CD4-positive, alpha-beta memory T cell (primary cell): ENCODE measurements at regions of chr2 and their contacts with region 1.

Region 1: DNA sequence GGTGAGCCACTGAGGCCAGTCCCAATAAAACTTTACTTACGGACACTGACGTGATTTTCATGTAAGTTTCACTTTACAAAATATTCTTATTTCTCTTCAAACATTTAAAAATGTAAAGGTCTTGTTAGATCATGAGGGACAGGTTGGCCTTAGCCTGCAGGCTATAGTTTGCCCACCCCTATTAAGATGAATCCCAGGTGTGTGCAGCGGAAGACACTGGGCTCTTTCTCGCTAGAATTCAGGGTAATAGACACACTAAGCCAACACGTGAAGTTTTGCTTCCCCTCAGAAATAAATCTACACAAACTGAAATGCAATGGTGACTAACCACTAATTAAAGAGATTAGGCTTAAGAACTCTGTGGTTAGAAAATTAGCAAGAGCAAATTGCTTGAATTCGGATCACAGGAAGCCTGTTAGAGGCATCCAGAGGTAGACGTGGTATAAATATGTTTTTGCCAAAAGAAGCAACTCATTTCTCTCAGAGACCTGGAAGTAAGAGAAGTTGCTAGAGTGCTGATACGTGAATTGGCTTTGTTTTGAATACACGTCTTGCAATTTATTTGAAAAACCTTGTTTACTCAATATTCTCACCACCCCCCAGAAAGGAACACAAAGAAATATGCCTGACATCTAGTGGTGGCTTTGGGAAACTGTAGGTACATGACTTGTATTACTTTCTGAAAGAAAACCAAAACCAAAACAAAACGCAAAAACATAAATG is 151.6 kb downstream of the DTNB start:
- DNase-seq: peak; percentile 68 to 76 (median 72)
- H3K4me3 ChIP-seq: no peak overlapping the region
- H3K4me3 Mint-ChIP-seq: peak overlapping the region in 6 of 8 donors; percentile 4 to 75 (median 21)
- H3K27ac ChIP-seq: no peak overlapping the region
- H3K27ac Mint-ChIP-seq: peak overlapping the region in 5 of 7 donors; percentile 48 to 80 (median 54)
- H3K4me1 ChIP-seq: peaks cover 10% of the 10 kb centered on the region
- H3K4me1 Mint-ChIP-seq: peaks cover 4 to 12% (median 7%) of the 10 kb centered on the region in 4 donors
- H3K27me3 ChIP-seq: no peaks in the 10 kb centered on the region
- H3K27me3 Mint-ChIP-seq: no peaks in the 10 kb centered on the region

Region 2: DNA sequence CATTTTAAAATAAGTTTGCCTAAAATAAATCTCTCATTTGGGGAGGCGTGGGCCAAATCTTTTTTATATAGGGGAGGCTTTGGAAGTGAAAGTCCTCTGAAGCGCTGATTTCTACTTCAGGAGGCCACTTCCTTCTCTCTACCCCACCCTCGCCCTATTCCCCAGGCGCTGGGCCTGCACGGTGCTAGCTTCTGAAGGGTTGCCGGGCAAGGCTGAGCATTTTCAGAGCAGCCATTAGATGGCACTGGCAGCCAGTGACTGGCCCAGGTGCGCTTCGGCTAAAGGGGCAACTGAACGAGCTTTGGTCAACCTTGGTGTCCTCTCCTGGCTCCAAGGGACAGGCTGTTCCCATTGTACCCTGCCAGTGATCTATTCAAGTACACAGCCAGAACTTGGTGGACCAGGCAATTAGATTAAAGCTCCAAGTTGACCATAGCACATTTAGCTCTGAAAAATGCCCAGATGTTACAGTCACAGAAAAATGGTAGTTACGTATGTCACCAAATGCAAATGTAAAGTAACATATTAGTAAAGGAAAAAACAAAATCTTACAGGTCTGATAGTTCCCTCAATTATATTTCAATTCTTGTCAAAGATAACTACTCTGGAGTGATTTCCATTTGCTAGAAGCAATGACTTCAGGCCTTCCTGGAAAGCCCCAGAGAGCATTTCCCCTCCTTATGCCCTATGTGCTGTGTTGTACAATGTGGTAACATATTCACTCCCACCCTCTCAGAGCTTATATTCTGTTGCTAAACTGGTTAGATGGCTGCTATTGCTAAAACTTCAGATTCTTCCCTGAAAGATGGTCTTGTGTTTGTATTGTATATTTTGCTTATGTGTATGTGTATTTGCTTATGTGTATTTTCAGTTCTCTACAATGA is 355.6 kb before region 1 on chr2:
- CTCF ChIA-PET with region 1: interaction called, 3 read pairs
- POLR2A ChIA-PET with region 1: no interaction called
- intact Hi-C with region 1: loop called (anchors 1 kb)
- DNase-seq: peak; percentile 20 to 35 (median 29)
- H3K4me3 ChIP-seq: no peak overlapping the region
- H3K4me3 Mint-ChIP-seq: peak overlapping the region in 4 of 8 donors; percentile 9 to 87 (median 57)
- H3K27ac ChIP-seq: no peak overlapping the region
- H3K27ac Mint-ChIP-seq: no peak overlapping the region
- H3K4me1 ChIP-seq: peaks cover 13% of the 10 kb centered on the region
- H3K4me1 Mint-ChIP-seq: peaks cover 9 to 33% (median 17%) of the 10 kb centered on the region in 4 donors
- H3K27me3 ChIP-seq: peaks cover 20% of the 10 kb centered on the region
- H3K27me3 Mint-ChIP-seq: peaks cover 21 to 22% of the 10 kb centered on the region in 2 donors

Region 3: DNA sequence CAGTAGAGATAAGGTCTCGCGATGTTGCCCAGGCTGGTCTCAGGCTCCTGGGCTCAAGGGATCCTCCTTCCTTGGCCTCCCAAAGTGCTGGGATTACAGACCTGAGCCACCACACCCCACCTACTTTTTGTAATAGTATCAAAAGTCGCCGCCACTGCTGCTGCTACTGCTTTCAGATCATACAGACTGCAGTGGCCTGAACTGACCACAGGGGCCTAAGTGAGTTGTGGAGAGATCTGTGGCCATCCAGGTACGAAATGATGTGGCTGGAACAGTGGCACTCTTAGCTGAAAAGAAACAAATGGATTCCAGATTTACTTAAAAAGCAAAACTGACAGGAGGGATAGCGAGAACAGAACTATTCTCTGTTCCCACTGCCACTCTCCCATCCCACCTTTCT is 320.6 kb before region 1 on chr2:
- CTCF ChIA-PET with region 1: no interaction called
- POLR2A ChIA-PET with region 1: no interaction called
- intact Hi-C with region 1: loop called (anchors 1 kb)
- DNase-seq: no peak
- H3K4me3 ChIP-seq: no peak overlapping the region
- H3K4me3 Mint-ChIP-seq: no peak overlapping the region
- H3K27ac ChIP-seq: no peak overlapping the region
- H3K27ac Mint-ChIP-seq: peak overlapping the region in 1 of 7 donors; percentile 37
- H3K4me1 ChIP-seq: peaks cover 9% of the 10 kb centered on the region
- H3K4me1 Mint-ChIP-seq: peaks cover 2 to 19% (median 8%) of the 10 kb centered on the region in 4 donors
- H3K27me3 ChIP-seq: no peaks in the 10 kb centered on the region
- H3K27me3 Mint-ChIP-seq: peaks cover 0 to 3% of the 10 kb centered on the region in 2 donors

Region 4: GRCh38 chr2:25342372-25343186 is 179.2 kb before region 1 on chr2:
- CTCF ChIA-PET with region 1: no interaction called
- POLR2A ChIA-PET with region 1: no interaction called
- intact Hi-C with region 1: loop called (anchors 1 kb)
- DNase-seq: peak; percentile 78 to 83 (median 81)
- H3K4me3 ChIP-seq: peak overlapping the region in 1 of 2 donors; percentile 52
- H3K4me3 Mint-ChIP-seq: peak overlapping the region; percentile 66 to 89 (median 82)
- H3K27ac ChIP-seq: no peak overlapping the region
- H3K27ac Mint-ChIP-seq: peak overlapping the region in 3 of 7 donors; percentile 74 to 84 (median 74)
- H3K4me1 ChIP-seq: peaks cover 34% of the 10 kb centered on the region
- H3K4me1 Mint-ChIP-seq: peaks cover 10 to 35% (median 23%) of the 10 kb centered on the region in 4 donors
- H3K27me3 ChIP-seq: no peaks in the 10 kb centered on the region
- H3K27me3 Mint-ChIP-seq: no peaks in the 10 kb centered on the region

Region 5: DNA sequence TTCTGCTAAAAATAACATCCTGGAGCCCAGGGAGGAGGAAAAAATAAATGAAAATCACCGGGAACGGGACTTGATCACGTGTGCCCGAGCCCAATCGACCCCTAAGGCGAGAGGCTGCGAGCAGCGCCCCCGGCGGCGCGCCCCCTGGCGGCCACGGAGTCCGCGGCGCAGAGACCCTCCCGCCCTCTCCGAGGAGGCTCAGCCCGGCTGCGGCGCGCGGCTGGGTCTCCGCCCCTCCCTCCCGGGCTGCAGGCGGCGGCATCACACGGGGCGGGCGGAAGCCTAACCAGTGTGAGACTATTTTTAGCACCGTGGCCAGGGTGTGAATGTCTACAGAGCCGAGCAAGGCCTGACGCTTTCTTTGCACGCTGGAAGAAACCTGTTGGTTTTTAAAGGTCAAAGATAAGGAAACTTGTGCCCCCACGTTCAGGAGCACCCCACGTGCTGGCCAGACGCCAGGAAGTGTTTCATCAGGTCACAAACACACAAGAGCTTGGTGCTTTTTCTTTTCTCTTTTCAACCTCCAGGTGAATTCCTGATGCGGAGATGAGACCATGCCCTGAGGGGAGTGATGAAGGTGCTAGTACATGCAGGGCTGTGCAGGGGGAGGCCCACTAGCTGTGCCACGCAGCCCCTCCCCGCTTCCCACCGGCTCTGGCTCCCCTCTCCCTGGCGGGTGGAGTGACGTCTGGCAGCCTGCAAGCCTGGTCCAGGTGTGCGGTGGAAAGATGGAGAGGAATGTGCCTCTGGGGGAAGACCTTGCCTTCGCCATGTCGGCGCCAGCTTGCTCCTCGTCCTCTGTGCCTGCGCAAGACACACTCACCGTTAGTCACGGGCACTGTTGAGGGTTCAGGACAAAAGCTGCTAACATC is 144.8 kb before region 1 on chr2:
- CTCF ChIA-PET with region 1: interaction called, 5 read pairs
- POLR2A ChIA-PET with region 1: no interaction called
- intact Hi-C with region 1: loop called (anchors 1 kb)
- DNase-seq: peak; percentile 92 to 95 (median 92)
- H3K4me3 ChIP-seq: peak overlapping the region in 1 of 2 donors; percentile 36
- H3K4me3 Mint-ChIP-seq: peak overlapping the region; percentile 48 to 85 (median 74)
- H3K27ac ChIP-seq: peak overlapping the region; percentile 57
- H3K27ac Mint-ChIP-seq: peak overlapping the region; percentile 90 to 96 (median 94)
- H3K4me1 ChIP-seq: peaks cover 38% of the 10 kb centered on the region
- H3K4me1 Mint-ChIP-seq: peaks cover 19 to 36% (median 23%) of the 10 kb centered on the region in 4 donors
- H3K27me3 ChIP-seq: no peaks in the 10 kb centered on the region
- H3K27me3 Mint-ChIP-seq: no peaks in the 10 kb centered on the region

Region 6: GRCh38 chr2:25867396-25868003 is 345.7 kb after region 1 on chr2:
- CTCF ChIA-PET with region 1: no interaction called
- POLR2A ChIA-PET with region 1: no interaction called
- intact Hi-C with region 1: no loop called
- DNase-seq: no peak
- H3K4me3 ChIP-seq: no peak overlapping the region
- H3K4me3 Mint-ChIP-seq: no peak overlapping the region
- H3K27ac ChIP-seq: no peak overlapping the region
- H3K27ac Mint-ChIP-seq: peak overlapping the region in 4 of 7 donors; percentile 1 to 39 (median 19)
- H3K4me1 ChIP-seq: peaks cover 7% of the 10 kb centered on the region
- H3K4me1 Mint-ChIP-seq: peaks cover 11 to 15% (median 13%) of the 10 kb centered on the region in 4 donors
- H3K27me3 ChIP-seq: no peaks in the 10 kb centered on the region
- H3K27me3 Mint-ChIP-seq: no peaks in the 10 kb centered on the region